ENCODE measurements at regions of chr12 and their contacts with region 1.

Region 1: GRCh38 chr12:4307593-4308333 is 13.2 kb upstream of the TIGAR start:
- DNase-seq: peak; percentile 76 to 93
- H3K4me3 ChIP-seq: 0 out of 2 replicates have a peak overlapping the region, but pooled peaks have one; percentile 23
- H3K27ac ChIP-seq: no peak overlapping the region
- H3K4me1 ChIP-seq: peaks cover 10% of the 10 kb centered on the region; the same call in 1 of the 2 replicates
- H3K27me3 ChIP-seq: peaks cover 45% of the 10 kb centered on the region
- CTCF ChIP-seq: peak; percentile 76

Region 2: GRCh38 chr12:4320853-4321701 is 13.3 kb after region 1 on chr12 and contains the start of gene TIGAR:
- CTCF ChIA-PET with region 1: interaction called, 3 read pairs
- POLR2A ChIA-PET with region 1: no interaction called
- intact Hi-C with region 1: loop called (anchors 1 kb)
- DNase-seq: peak; percentile 86 to 99
- H3K4me3 ChIP-seq: peak within 1 kb of the TSS; percentile 95
- H3K27ac ChIP-seq: peak within 1 kb of the TSS; percentile 69
- H3K4me1 ChIP-seq: peaks cover 12% of the 10 kb centered on the region
- H3K27me3 ChIP-seq: no peaks in the 10 kb centered on the region
- CTCF ChIP-seq: no peak
- total RNA-seq, gene TIGAR: 9.0 and 13.2 TPM in 2 replicates

Region 3: GRCh38 chr12:4356041-4356327 is 48.2 kb after region 1 on chr12:
- CTCF ChIA-PET with region 1: no interaction called
- POLR2A ChIA-PET with region 1: no interaction called
- intact Hi-C with region 1: loop called (anchors 2 kb)
- DNase-seq: peak in 1 of 2 experiments; percentile 36
- H3K4me3 ChIP-seq: no peak overlapping the region
- H3K27ac ChIP-seq: no peak overlapping the region
- H3K4me1 ChIP-seq: no peaks in the 10 kb centered on the region
- H3K27me3 ChIP-seq: peaks cover 3% of the 10 kb centered on the region; the same call in 1 of the 2 replicates
- CTCF ChIP-seq: peak; percentile 57

Region 4: GRCh38 chr12:4421590-4422031 is 113.8 kb after region 1 on chr12:
- CTCF ChIA-PET with region 1: no interaction called
- POLR2A ChIA-PET with region 1: no interaction called
- intact Hi-C with region 1: loop called (anchors 2 kb)
- DNase-seq: peak in 1 of 2 experiments; percentile 6
- H3K4me3 ChIP-seq: no peak overlapping the region
- H3K27ac ChIP-seq: no peak overlapping the region
- H3K4me1 ChIP-seq: no peaks in the 10 kb centered on the region
- H3K27me3 ChIP-seq: peaks cover 83% of the 10 kb centered on the region
- CTCF ChIP-seq: peak; percentile 85

Region 5: GRCh38 chr12:4526923-4527546 is 219.3 kb after region 1 on chr12:
- CTCF ChIA-PET with region 1: interaction called, 7 read pairs
- POLR2A ChIA-PET with region 1: no interaction called
- intact Hi-C with region 1: loop called (anchors 1 kb)
- DNase-seq: no peak
- H3K4me3 ChIP-seq: no peak overlapping the region
- H3K27ac ChIP-seq: no peak overlapping the region
- H3K4me1 ChIP-seq: no peaks in the 10 kb centered on the region
- H3K27me3 ChIP-seq: no peaks in the 10 kb centered on the region
- CTCF ChIP-seq: peak; percentile 86

Region 6: GRCh38 chr12:4763549-4763948 is 455.8 kb after region 1 on chr12:
- CTCF ChIA-PET with region 1: no interaction called
- POLR2A ChIA-PET with region 1: no interaction called
- intact Hi-C with region 1: loop called (anchors 5 kb)
- DNase-seq: no peak
- H3K4me3 ChIP-seq: no peak overlapping the region
- H3K27ac ChIP-seq: no peak overlapping the region
- H3K4me1 ChIP-seq: no peaks in the 10 kb centered on the region
- H3K27me3 ChIP-seq: peaks cover 75% of the 10 kb centered on the region
- CTCF ChIP-seq: no peak

Region 7: GRCh38 chr12:5003020-5003666 is 695.4 kb after region 1 on chr12:
- CTCF ChIA-PET with region 1: no interaction called
- POLR2A ChIA-PET with region 1: no interaction called
- intact Hi-C with region 1: loop called (anchors 2 kb)
- DNase-seq: peak in 1 of 2 experiments; percentile 49
- H3K4me3 ChIP-seq: no peak overlapping the region
- H3K27ac ChIP-seq: no peak overlapping the region
- H3K4me1 ChIP-seq: no peaks in the 10 kb centered on the region
- H3K27me3 ChIP-seq: peaks cover 12% of the 10 kb centered on the region
- CTCF ChIP-seq: peak; percentile 88

Measured in PC-9 (cell line).